Mucosa of descending colon (tissue), 3 donors: ENCODE measurements at regions of chr11 and their contacts with region 1.

Region 1: GRCh38 chr11:63212742-63213141 is 30.7 kb downstream of the SLC22A25 start:
- DNase-seq: peak in 1 of 3 donors; percentile 12
- ATAC-seq: no peak
- H3K4me3 ChIP-seq: no peak overlapping the region
- H3K4me1 ChIP-seq: no peaks in the 10 kb centered on the region
- CTCF ChIP-seq: no peak

Region 2: DNA sequence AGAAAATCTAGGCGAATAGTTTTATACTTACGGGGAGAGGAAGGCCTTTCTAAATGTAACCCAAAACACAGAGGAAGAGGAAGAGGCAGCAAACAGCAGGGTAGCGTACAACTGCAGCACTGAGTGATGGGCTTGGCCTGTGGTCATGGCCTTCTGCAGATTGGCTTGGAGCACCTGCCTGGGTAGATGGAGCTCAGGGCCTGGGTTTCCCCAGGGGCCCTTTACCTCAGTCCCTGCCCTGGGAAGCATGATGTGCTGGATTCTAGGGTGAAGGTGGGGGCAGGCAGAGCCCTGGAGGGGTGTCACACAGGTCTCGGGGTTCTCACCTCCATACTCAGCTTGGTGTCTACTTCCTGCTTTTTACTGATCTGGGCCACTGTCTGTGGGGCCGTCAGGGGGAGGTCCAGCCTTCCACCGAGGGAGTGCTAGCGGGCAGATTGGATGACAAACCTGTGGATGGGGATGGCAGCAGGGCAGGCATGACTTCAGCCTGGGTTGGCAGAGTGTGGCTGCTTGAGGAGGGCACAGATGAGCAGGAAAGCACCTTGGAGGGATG is 263.9 kb before region 1 on chr11:
- intact Hi-C with region 1: no loop called
- DNase-seq: no peak
- ATAC-seq: no peak
- H3K4me3 ChIP-seq: no peak overlapping the region
- H3K4me1 ChIP-seq: no peaks in the 10 kb centered on the region
- CTCF ChIP-seq: no peak

Region 3: GRCh38 chr11:63032457-63032856 is 180.3 kb before region 1 on chr11:
- intact Hi-C with region 1: loop called in 1 of 2 experiments (anchors 10 kb)
- DNase-seq: no peak
- ATAC-seq: no peak
- H3K4me3 ChIP-seq: no peak overlapping the region
- H3K4me1 ChIP-seq: no peaks in the 10 kb centered on the region
- CTCF ChIP-seq: no peak